Uterus (tissue), 4 donors: ENCODE measurements at regions of chr13 and their contacts with region 1.

Region 1: GRCh38 chr13:104597546-104598180 is 1531.4 kb upstream of the SLC10A2 start:
- DNase-seq: no peak
- H3K4me3 ChIP-seq: no peak overlapping the region
- H3K27ac ChIP-seq: no peak overlapping the region
- H3K4me1 ChIP-seq: no peaks in the 10 kb centered on the region
- H3K27me3 ChIP-seq: no peaks in the 10 kb centered on the region
- CTCF ChIP-seq: no peak
- POLR2A ChIP-seq: no peak

Region 2: DNA sequence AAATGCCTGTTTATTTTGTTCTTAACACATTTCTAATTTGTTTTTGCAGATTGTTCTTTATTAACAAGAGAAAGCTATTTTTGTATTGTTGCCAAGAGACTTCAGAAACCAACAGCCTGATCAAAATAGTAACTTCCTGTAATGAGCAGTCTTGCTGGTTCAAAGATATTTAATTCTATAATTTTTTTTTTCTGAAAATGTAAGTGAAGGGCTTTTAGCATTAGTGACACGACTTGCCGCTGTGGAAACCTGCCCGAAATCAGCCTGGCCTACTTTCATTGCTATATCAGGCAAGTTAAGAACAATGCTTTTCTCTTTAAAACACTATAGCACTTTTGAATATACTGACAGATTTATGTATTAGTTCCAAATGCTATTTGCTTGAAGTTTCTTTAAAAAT is 1563.5 kb after region 1 on chr13:
- intact Hi-C with region 1: loop called (anchors 5 kb)
- DNase-seq: no peak
- H3K4me3 ChIP-seq: no peak overlapping the region
- H3K27ac ChIP-seq: no peak overlapping the region
- H3K4me1 ChIP-seq: no peaks in the 10 kb centered on the region
- H3K27me3 ChIP-seq: no peaks in the 10 kb centered on the region
- CTCF ChIP-seq: no peak
- POLR2A ChIP-seq: no peak